ENCODE measurements at regions of chr9 and their contacts with region 1.

Region 1: GRCh38 chr9:127980706-127981558 is at the start of gene EEIG1:
- DNase-seq: peak; percentile 89
- ATAC-seq: peak; percentile 89
- H3K4me3 ChIP-seq: peak within 1 kb of the TSS; percentile 95
- H3K27ac ChIP-seq: no peak within 1 kb of the TSS
- H3K4me1 ChIP-seq: peaks cover 20% of the 10 kb centered on the region
- H3K27me3 ChIP-seq: no peaks in the 10 kb centered on the region
- CTCF ChIP-seq: no peak
- total RNA-seq, gene EEIG1: 10.8 and 26.1 TPM in 2 replicates

Region 2: GRCh38 chr9:127828262-127829031 is 152.5 kb before region 1 on chr9:
- CTCF ChIA-PET with region 1: no interaction called
- POLR2A ChIA-PET with region 1: no interaction called
- intact Hi-C with region 1: no loop called
- DNase-seq: peak; percentile 36
- ATAC-seq: peak; percentile 80
- H3K4me3 ChIP-seq: peak overlapping the region; percentile 48; the same call in 1 of the 2 replicates
- H3K27ac ChIP-seq: no peak overlapping the region
- H3K4me1 ChIP-seq: 0 out of 2 replicates have a peak, but pooled peaks cover 3% of the 10 kb centered on the region
- H3K27me3 ChIP-seq: no peaks in the 10 kb centered on the region
- CTCF ChIP-seq: no peak

Region 3: DNA sequence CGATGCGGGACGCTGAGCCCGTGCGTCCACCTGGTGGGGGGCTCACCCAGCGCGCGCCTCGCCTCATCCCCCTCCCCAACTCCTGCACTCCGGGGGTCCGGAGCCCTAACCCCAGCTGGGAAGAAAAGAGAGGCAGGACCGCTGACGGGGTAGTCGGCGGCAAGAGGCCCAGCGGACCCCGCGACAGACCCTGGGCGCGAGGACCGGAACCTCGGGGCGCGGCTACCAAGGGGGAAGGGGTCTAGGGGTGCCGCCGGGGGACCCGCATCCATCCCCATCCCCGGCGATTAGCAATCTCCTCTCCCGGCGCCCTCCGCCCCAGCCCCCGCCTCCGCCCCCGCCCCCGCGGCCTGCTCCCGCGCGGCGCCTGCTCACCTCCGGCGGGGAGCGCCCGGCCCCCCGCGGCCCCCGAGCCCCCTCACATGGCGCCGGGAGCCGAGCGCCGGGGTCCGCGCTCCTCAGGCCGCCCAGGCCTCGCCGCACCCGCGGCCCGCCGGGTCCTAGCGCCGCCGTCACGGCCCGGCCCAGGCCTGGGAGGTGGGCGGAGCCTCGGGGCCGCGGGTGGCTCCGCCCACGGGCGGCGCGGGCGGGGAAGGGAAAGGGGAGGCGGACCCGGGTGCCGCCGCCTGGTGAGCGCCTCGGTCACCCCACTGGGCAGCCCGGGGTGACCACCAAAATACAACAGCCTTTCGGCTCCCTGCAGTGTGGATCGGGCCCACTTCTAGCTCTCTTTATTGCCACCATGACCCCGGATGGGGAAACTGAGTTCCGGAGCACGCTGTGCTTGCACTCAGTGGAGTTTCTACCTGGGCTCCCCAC is 81.6 kb before region 1 on chr9 and contains the start of gene ST6GALNAC6:
- CTCF ChIA-PET with region 1: no interaction called
- POLR2A ChIA-PET with region 1: no interaction called
- intact Hi-C with region 1: no loop called
- DNase-seq: peak; percentile 68
- ATAC-seq: peak; percentile 84
- H3K4me3 ChIP-seq: peak within 1 kb of the TSS; percentile 84
- H3K27ac ChIP-seq: no peak within 1 kb of the TSS
- H3K4me1 ChIP-seq: peaks cover 5% of the 10 kb centered on the region; the same call in 1 of the 2 replicates
- H3K27me3 ChIP-seq: no peaks in the 10 kb centered on the region
- CTCF ChIP-seq: no peak
- total RNA-seq, gene ST6GALNAC6: 8.5 and 14.5 TPM in 2 replicates

Region 4: DNA sequence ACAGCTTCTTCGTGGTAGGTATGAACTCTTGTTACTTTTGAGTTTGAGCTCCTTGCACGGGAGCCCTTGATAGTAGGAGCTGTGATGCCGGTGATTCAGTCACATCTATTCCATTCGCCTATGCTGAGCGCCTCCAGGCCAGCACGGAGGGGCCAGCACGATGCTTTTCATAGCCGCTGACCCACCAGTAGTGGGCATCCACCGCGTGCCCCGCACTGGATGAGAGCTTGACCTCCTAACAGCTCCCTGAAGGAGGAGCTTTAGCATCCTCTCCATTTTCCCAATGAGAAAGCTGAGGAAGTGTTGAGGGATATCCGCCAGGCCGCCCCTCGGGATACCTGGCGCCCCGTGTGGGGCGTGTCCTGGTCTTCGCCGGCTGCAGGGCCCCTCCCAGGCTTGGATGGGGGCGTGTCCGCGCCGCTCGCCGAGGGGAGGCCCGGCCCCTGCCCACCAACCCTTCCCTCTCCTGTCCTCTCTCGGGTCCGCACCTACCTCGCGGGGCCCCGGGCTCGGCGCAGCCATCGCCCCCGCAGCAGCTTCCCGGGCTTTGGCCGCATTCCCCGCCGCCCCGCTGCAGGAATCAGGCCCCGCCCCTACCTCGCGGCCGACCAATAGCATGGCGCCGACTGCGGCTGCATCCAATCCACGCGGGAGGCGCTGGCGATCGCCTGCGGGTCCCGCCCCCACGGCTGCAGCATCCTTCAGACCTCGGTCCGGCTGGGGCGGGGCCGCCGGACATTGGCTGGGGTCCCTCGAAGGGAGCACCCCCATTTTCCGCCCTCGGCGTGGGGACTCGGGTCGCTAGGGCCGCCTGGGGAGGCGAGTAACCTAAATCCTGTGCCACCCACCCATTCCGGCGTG is 50.5 kb before region 1 on chr9 and contains the start of gene PIP5KL1:
- CTCF ChIA-PET with region 1: interaction called, 13 read pairs
- POLR2A ChIA-PET with region 1: no interaction called
- intact Hi-C with region 1: no loop called
- DNase-seq: peak; percentile 68
- ATAC-seq: peak; percentile 81
- H3K4me3 ChIP-seq: peak within 1 kb of the TSS; percentile 53
- H3K27ac ChIP-seq: peak within 1 kb of the TSS; percentile 5; the same call in 1 of the 2 replicates
- H3K4me1 ChIP-seq: peaks cover 26% of the 10 kb centered on the region
- H3K27me3 ChIP-seq: no peaks in the 10 kb centered on the region
- CTCF ChIP-seq: no peak
- total RNA-seq, gene PIP5KL1: 5.1 and 5.4 TPM in 2 replicates

Region 5: GRCh38 chr9:127943731-127944144 is 37.2 kb before region 1 on chr9:
- CTCF ChIA-PET with region 1: interaction called, 4 read pairs
- POLR2A ChIA-PET with region 1: no interaction called
- intact Hi-C with region 1: loop called (anchors 2 kb)
- DNase-seq: peak; percentile 77
- ATAC-seq: peak; percentile 92
- H3K4me3 ChIP-seq: no peak overlapping the region
- H3K27ac ChIP-seq: no peak overlapping the region
- H3K4me1 ChIP-seq: no peaks in the 10 kb centered on the region
- H3K27me3 ChIP-seq: no peaks in the 10 kb centered on the region
- CTCF ChIP-seq: peak; percentile 84

Region 6: GRCh38 chr9:128001779-128002298 is 20.9 kb after region 1 on chr9:
- CTCF ChIA-PET with region 1: no interaction called
- POLR2A ChIA-PET with region 1: no interaction called
- intact Hi-C with region 1: no loop called
- DNase-seq: peak; percentile 83
- ATAC-seq: peak; percentile 93
- H3K4me3 ChIP-seq: no peak overlapping the region
- H3K27ac ChIP-seq: peak overlapping the region; percentile 84
- H3K4me1 ChIP-seq: peaks cover 24% of the 10 kb centered on the region
- H3K27me3 ChIP-seq: no peaks in the 10 kb centered on the region
- CTCF ChIP-seq: no peak